ENCODE measurements at regions of chr20 and their contacts with region 1.

Region 1: DNA sequence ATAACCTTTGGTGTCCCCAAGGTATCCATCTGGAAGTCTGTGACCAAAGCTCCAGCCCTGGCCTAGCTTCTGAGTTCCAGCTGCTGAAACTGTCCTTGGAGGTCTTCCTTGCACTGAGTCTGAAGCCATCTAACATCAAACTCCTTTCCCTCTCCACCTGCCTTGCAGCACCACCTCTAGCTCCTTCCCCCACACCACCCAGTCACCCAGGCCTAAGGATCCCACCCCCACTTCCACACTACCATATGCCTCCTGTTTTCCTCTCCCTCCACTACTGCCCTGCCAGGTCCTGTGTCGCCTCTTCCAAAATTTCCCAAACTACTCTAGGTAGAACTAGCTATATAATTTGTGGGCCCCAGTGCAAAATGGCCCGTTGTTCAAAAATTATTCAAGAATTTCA is 10.8 kb upstream of the MATN4 start:
- DNase-seq: peak; percentile 68
- H3K4me3 Mint-ChIP-seq: peak overlapping the region; percentile 71
- H3K27ac Mint-ChIP-seq: peak overlapping the region; percentile 93
- H3K4me1 Mint-ChIP-seq: peaks cover 39% of the 10 kb centered on the region
- H3K27me3 Mint-ChIP-seq: peaks cover 12% of the 10 kb centered on the region

Region 2: GRCh38 chr20:45266977-45267376 is 52.0 kb before region 1 on chr20:
- intact Hi-C with region 1: no loop called
- DNase-seq: no peak
- H3K4me3 Mint-ChIP-seq: no peak overlapping the region
- H3K27ac Mint-ChIP-seq: no peak overlapping the region
- H3K4me1 Mint-ChIP-seq: no peaks in the 10 kb centered on the region
- H3K27me3 Mint-ChIP-seq: peaks cover 50% of the 10 kb centered on the region

Region 3: DNA sequence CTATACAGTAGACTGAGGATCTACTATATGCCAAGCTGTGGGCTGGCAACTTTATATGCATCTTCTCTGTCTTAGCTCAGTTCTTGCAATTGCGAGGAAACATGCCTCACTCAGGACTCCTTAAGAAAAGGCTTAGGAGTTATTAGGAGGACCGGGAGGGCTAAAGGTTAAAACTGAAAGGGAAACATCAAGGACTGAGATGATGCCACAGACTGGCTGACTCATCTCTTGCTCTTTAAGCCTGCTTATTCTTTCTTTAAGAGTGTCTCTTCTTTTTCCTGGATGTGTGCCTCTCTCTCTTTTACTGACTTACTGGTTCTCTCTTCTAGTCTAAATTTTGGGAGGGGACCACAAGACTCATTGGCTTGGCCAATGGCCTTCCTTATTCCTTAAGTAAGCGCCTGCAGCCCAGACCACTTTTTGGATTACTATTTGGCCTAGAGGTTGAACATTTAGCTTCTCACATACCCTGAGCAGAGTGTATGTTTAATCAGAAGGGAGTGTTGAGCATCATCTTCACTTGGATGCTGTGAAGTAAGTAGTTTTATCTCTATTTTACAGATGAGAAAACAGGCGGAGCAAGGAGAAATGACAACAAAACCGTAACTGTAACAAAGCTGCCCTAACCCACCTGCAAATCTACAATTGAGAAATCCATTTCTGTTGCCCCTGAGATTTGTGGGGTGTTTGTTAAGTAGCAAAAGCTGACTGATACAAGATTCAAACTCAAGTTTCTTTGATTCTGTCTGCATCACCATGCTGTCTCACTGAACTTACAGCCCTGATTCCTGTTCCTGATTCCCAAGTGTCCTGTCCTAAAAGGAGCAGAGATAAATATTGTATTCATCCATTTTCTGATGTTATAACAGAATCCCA is 36.5 kb after region 1 on chr20:
- intact Hi-C with region 1: loop called (anchors 2 kb)
- DNase-seq: peak; percentile 76
- H3K4me3 Mint-ChIP-seq: peak overlapping the region; percentile 82
- H3K27ac Mint-ChIP-seq: peak overlapping the region; percentile 96
- H3K4me1 Mint-ChIP-seq: peaks cover 57% of the 10 kb centered on the region
- H3K27me3 Mint-ChIP-seq: no peaks in the 10 kb centered on the region

Region 4: GRCh38 chr20:45436732-45437391 is 117.9 kb after region 1 on chr20:
- intact Hi-C with region 1: loop called (anchors 1 kb)
- DNase-seq: peak; percentile 96
- H3K4me3 Mint-ChIP-seq: peak overlapping the region; percentile 84
- H3K27ac Mint-ChIP-seq: no peak overlapping the region
- H3K4me1 Mint-ChIP-seq: peaks cover 17% of the 10 kb centered on the region
- H3K27me3 Mint-ChIP-seq: peaks cover 2% of the 10 kb centered on the region

Region 5: GRCh38 chr20:45450097-45450818 is 131.3 kb after region 1 on chr20:
- intact Hi-C with region 1: loop called (anchors 2 kb)
- DNase-seq: peak; percentile 76
- H3K4me3 Mint-ChIP-seq: no peak overlapping the region
- H3K27ac Mint-ChIP-seq: no peak overlapping the region
- H3K4me1 Mint-ChIP-seq: peaks cover 11% of the 10 kb centered on the region
- H3K27me3 Mint-ChIP-seq: peaks cover 5% of the 10 kb centered on the region

Region 6: GRCh38 chr20:45771182-45771759 is 452.3 kb after region 1 on chr20:
- intact Hi-C with region 1: loop called (anchors 1 kb)
- DNase-seq: peak; percentile 94
- H3K4me3 Mint-ChIP-seq: no peak overlapping the region
- H3K27ac Mint-ChIP-seq: no peak overlapping the region
- H3K4me1 Mint-ChIP-seq: peaks cover 8% of the 10 kb centered on the region
- H3K27me3 Mint-ChIP-seq: peaks cover 12% of the 10 kb centered on the region

Region 7: GRCh38 chr20:45987108-45987780 is 668.3 kb after region 1 on chr20:
- intact Hi-C with region 1: no loop called
- DNase-seq: peak; percentile 94
- H3K4me3 Mint-ChIP-seq: no peak overlapping the region
- H3K27ac Mint-ChIP-seq: no peak overlapping the region
- H3K4me1 Mint-ChIP-seq: peaks cover 6% of the 10 kb centered on the region
- H3K27me3 Mint-ChIP-seq: peaks cover 20% of the 10 kb centered on the region

Measured in activated CD4-positive, alpha-beta T cell treated with anti-CD3 and anti-CD28 coated beads, Interleukin-2, amount 10 ng/mL, durations not matched to agents 24 days and 14 days (primary cell).